ENCODE measurements at regions of chr5 and their contacts with region 1.

Region 1: GRCh38 chr5:111680737-111681413 is 76.1 kb downstream of the NREP start:
- DNase-seq: peak in 1 of 2 donors; percentile 63
- ATAC-seq: peak; percentile 79
- H3K4me3 ChIP-seq: no peak overlapping the region
- H3K27ac ChIP-seq: peak overlapping the region in 1 of 2 donors; percentile 33
- H3K4me1 ChIP-seq: peaks cover 4 to 6% of the 10 kb centered on the region in 2 donors
- H3K27me3 ChIP-seq: no peaks in the 10 kb centered on the region

Region 2: DNA sequence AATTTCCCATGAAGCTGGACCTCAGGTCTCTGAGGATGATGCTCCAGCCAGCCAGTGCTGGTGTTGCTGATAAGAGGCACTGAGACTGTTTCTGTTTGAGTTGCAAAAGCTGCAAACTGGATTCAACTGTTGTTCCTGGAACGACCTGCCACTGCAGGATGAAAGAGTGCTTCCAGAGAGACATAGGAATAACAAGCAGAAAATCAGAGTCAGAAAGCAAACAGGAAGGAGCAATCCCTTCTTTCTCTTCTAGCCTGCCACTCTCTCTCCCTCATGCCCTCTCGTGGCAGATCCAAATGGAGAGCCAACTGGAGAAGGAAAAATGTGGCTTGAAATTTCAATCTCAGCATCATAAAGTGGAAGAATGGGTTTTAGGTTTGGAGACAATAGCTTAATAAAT is 279.0 kb before region 1 on chr5:
- intact Hi-C with region 1: no loop called
- DNase-seq: no peak
- ATAC-seq: no peak
- H3K4me3 ChIP-seq: no peak overlapping the region
- H3K27ac ChIP-seq: no peak overlapping the region
- H3K4me1 ChIP-seq: no peaks in the 10 kb centered on the region
- H3K27me3 ChIP-seq: no peaks in the 10 kb centered on the region

Region 3: GRCh38 chr5:111550279-111551020 is 130.4 kb before region 1 on chr5:
- intact Hi-C with region 1: loop called in 1 of 2 experiments (anchors 10 kb)
- DNase-seq: peak; percentile 77 to 84
- ATAC-seq: peak; percentile 93
- H3K4me3 ChIP-seq: no peak overlapping the region
- H3K27ac ChIP-seq: no peak overlapping the region
- H3K4me1 ChIP-seq: no peaks in the 10 kb centered on the region
- H3K27me3 ChIP-seq: no peaks in the 10 kb centered on the region

Region 4: GRCh38 chr5:111735583-111736270 is 54.9 kb after region 1 on chr5:
- intact Hi-C with region 1: loop called in 1 of 2 experiments (anchors 10 kb)
- DNase-seq: no peak
- ATAC-seq: no peak
- H3K4me3 ChIP-seq: no peak overlapping the region
- H3K27ac ChIP-seq: no peak overlapping the region
- H3K4me1 ChIP-seq: peaks cover 0 to 6% of the 10 kb centered on the region in 2 donors
- H3K27me3 ChIP-seq: no peaks in the 10 kb centered on the region

Region 5: GRCh38 chr5:111914966-111915636 is 234.2 kb after region 1 on chr5:
- intact Hi-C with region 1: no loop called
- DNase-seq: no peak
- ATAC-seq: no peak
- H3K4me3 ChIP-seq: no peak overlapping the region
- H3K27ac ChIP-seq: no peak overlapping the region
- H3K4me1 ChIP-seq: no peaks in the 10 kb centered on the region
- H3K27me3 ChIP-seq: no peaks in the 10 kb centered on the region

Measured in aorta (tissue), 5 donors.